ENCODE measurements at regions of chr18 and their contacts with region 1.

Region 1: DNA sequence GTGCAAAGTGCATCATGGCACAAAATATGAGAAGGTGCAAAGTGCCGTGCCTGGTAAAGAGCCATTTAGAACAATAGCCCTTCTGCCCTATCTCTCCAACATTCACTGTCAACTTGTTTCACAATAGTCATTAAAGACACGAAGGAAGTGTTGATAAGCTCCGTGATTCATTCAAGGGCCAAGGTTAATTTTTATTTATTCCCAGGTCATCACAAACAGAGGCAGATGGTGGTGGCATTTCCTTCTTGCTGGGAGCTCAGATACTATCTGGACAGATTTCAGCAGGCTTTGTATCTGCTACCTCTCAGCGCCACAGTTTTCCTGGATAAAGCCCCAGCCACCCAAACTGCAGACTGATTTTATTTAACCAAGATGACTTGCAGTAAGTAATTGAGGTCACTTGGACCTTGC is 309.3 kb downstream of the ZNF521 start:
- DNase-seq: no peak
- ATAC-seq: peak; percentile 63 to 72
- H3K4me3 ChIP-seq: no peak overlapping the region
- H3K27ac ChIP-seq: no peak overlapping the region
- H3K4me1 ChIP-seq: no peaks in the 10 kb centered on the region
- H3K27me3 ChIP-seq: no peaks in the 10 kb centered on the region

Region 2: GRCh38 chr18:25190472-25190871 is 147.8 kb after region 1 on chr18:
- intact Hi-C with region 1: no loop called
- DNase-seq: no peak
- ATAC-seq: peak in 1 of 2 donors; percentile 44
- H3K4me3 ChIP-seq: no peak overlapping the region
- H3K27ac ChIP-seq: no peak overlapping the region
- H3K4me1 ChIP-seq: peaks cover 4% of the 10 kb centered on the region
- H3K27me3 ChIP-seq: no peaks in the 10 kb centered on the region

Region 3: DNA sequence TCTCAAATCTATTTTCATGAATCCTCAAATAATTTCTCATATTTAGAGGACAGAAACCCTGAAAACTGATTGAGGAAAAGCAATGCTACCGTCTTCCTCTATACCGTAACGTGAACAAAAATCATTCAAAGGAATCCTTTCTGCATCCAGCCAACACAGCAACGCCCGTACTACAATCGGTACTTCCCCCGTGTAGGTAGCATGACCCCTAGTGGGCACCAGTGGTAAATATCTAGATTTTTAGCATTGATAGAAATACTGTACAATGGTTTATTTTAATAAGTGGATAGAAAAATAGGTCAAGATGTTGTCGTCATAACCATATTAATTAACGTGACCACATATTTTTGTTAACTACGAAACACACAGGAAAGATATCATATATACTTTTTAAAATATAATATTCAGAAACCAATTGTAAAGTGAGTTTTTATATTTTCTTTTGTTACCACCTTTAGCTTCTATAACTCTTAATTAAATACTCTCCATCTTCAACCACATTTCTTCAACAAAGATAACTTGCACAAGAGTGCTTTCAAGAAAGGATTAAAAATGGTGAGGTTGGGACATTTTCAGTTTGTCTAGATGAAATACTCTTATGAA is 853.6 kb after region 1 on chr18:
- intact Hi-C with region 1: loop called in 1 of 4 experiments (anchors 10 kb)
- DNase-seq: peak in 1 of 3 donors; percentile 19
- ATAC-seq: peak in 1 of 2 donors; percentile 67
- H3K4me3 ChIP-seq: no peak overlapping the region
- H3K27ac ChIP-seq: no peak overlapping the region
- H3K4me1 ChIP-seq: no peaks in the 10 kb centered on the region
- H3K27me3 ChIP-seq: no peaks in the 10 kb centered on the region